Mammary epithelial cell (primary cell): ENCODE measurements at regions of chr5 and their contacts with region 1.

Region 1: GRCh38 chr5:133376986-133377385 is 235.4 kb downstream of the FSTL4 start:
- DNase-seq: no peak
- H3K4me3 ChIP-seq: no peak overlapping the region
- H3K27ac ChIP-seq: no peak overlapping the region
- H3K4me1 ChIP-seq: peaks cover 17% of the 10 kb centered on the region
- H3K27me3 ChIP-seq: no peaks in the 10 kb centered on the region
- CTCF ChIP-seq: no peak

Region 2: DNA sequence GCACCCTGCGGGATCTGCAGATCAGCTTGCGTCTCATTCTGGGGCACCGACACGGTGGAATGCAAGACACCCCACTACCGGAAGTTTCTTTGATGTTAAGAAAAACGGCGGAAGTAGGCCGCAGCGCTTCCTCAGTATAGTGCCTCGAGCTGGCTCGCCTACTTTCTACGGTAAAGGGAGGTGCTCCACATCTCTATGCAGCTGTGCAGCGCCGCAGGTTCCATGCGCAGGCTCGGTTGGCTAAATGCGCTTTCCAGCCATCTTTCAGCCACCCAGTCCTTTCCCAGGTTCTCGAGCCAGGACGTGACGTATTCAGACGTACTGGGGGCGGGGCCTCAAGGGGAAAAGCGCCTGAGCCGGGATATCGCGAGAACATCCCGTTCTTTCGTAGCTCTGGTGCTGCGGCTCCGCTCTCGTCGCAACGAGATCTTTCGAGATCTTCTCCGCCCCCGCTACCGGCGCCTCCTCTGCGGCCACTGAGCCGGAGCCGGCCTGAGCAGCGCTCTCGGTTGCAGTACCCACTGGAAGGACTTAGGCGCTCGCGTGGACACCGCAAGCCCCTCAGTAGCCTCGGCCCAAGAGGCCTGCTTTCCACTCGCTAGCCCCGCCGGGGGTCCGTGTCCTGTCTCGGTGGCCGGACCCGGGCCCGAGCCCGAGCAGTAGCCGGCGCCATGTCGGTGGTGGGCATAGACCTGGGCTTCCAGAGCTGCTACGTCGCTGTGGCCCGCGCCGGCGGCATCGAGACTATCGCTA is 325.2 kb before region 1 on chr5 and contains the start of gene HSPA4:
- CTCF ChIA-PET with region 1: no interaction called
- dilution Hi-C with region 1: no loop called
- in situ Hi-C with region 1: no loop called
- intact Hi-C with region 1: no loop called
- DNase-seq: peak; percentile 98
- H3K4me3 ChIP-seq: peak within 1 kb of the TSS; percentile 72 to 96 (median 93)
- H3K27ac ChIP-seq: peak within 1 kb of the TSS; percentile 94
- H3K4me1 ChIP-seq: peaks cover 6% of the 10 kb centered on the region
- H3K27me3 ChIP-seq: no peaks in the 10 kb centered on the region
- CTCF ChIP-seq: no peak
- total RNA-seq, gene HSPA4: 137 to 189 TPM

Region 3: DNA sequence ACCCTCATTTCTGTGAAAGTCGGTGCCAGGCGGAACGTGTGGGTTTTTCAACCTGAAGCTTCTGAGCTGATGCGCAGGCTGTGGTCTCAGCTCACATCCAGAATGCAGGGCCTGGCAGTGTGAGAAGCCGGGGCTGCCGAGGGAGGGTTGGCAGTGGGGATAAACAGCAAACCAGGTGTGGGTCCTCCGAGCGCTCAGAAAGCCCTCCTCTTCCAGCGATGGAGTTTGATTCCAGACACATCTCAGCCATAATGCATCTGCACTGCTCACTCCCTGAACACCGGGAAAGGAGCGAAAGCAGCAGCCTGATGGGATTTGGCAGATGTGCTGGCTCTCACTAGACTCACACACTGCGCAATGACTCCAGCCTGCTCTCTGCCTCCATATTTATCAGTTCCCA is 45.0 kb before region 1 on chr5:
- CTCF ChIA-PET with region 1: no interaction called
- dilution Hi-C with region 1: loop called (anchors 5 kb)
- in situ Hi-C with region 1: no loop called
- intact Hi-C with region 1: no loop called
- DNase-seq: no peak
- H3K4me3 ChIP-seq: no peak overlapping the region
- H3K27ac ChIP-seq: no peak overlapping the region
- H3K4me1 ChIP-seq: peaks cover 6% of the 10 kb centered on the region
- H3K27me3 ChIP-seq: no peaks in the 10 kb centered on the region
- CTCF ChIP-seq: no peak